ENCODE measurements at regions of chr3 and their contacts with region 1.

Region 1: DNA sequence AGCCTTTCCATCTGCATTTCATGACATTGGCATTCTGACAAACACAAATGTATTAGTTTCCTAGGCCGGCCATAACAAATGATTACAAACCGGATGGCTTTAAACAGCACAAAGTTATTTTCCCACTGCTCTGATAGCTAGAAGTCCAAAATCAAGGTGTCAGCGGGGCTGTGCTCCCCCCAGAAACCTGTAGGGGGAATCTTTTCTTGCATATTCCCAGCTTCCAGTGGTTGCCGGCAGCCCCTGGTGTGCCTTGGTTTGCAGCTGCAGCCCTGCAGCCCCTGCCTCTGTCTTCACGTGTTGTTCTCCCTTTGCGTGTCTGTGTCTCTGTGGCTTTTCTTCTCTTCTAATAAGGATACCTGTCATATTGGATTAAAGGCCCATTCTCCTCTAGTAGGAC is 79.0 kb upstream of the CDV3 start:
- DNase-seq: no peak
- H3K4me3 ChIP-seq: no peak overlapping the region
- H3K27ac ChIP-seq: no peak overlapping the region
- H3K4me1 ChIP-seq: peaks cover 0 to 3% (median 0%) of the 10 kb centered on the region in 3 donors
- H3K27me3 ChIP-seq: no peaks in the 10 kb centered on the region
- CTCF ChIP-seq: peak in 2 of 6 experiments; percentile 13 to 21
- POLR2A ChIP-seq: no peak

Region 2: GRCh38 chr3:133540896-133541674 is 46.6 kb after region 1 on chr3:
- intact Hi-C with region 1: loop called (anchors 10 kb)
- DNase-seq: no peak
- H3K4me3 ChIP-seq: no peak overlapping the region
- H3K27ac ChIP-seq: peak overlapping the region in 3 of 4 donors; percentile 15 to 71 (median 64)
- H3K4me1 ChIP-seq: peaks cover 8 to 33% (median 17%) of the 10 kb centered on the region in 3 donors
- H3K27me3 ChIP-seq: no peaks in the 10 kb centered on the region
- CTCF ChIP-seq: no peak
- POLR2A ChIP-seq: no peak